ENCODE measurements at regions of chr5 and their contacts with region 1.

Region 1: GRCh38 chr5:10452768-10453331 is 11.2 kb downstream of the ROPN1L start:
- DNase-seq: peak; percentile 55
- ATAC-seq: peak; percentile 84
- H3K4me3 ChIP-seq: no peak overlapping the region
- H3K27ac ChIP-seq: no peak overlapping the region
- H3K4me1 ChIP-seq: no peaks in the 10 kb centered on the region
- H3K27me3 ChIP-seq: peaks cover 1 to 21% of the 10 kb centered on the region in 2 experiments; a peak in 3 of 5 replicates
- CTCF ChIP-seq: peak; percentile 79
- EP300 ChIP-seq: no peak
- POLR2A ChIP-seq: no peak
- RAD21 ChIP-seq: peak; percentile 71

Region 2: GRCh38 chr5:10339058-10339811 is 113.6 kb before region 1 on chr5:
- CTCF ChIA-PET with region 1: no interaction called
- POLR2A ChIA-PET with region 1: no interaction called
- in situ Hi-C with region 1: no loop called
- intact Hi-C with region 1: no loop called
- DNase-seq: no peak
- ATAC-seq: no peak
- H3K4me3 ChIP-seq: no peak overlapping the region
- H3K27ac ChIP-seq: no peak overlapping the region
- H3K4me1 ChIP-seq: peaks cover 13% of the 10 kb centered on the region
- H3K27me3 ChIP-seq: no peaks in the 10 kb centered on the region
- CTCF ChIP-seq: no peak
- EP300 ChIP-seq: no peak
- POLR2A ChIP-seq: no peak
- RAD21 ChIP-seq: no peak

Region 3: GRCh38 chr5:10627160-10627701 is 174.4 kb after region 1 on chr5:
- CTCF ChIA-PET with region 1: interaction called, 25 read pairs
- POLR2A ChIA-PET with region 1: no interaction called
- in situ Hi-C with region 1: loop called (anchors 5 kb)
- intact Hi-C with region 1: loop called (anchors 1 kb)
- DNase-seq: no peak
- ATAC-seq: peak; percentile 32
- H3K4me3 ChIP-seq: peak overlapping the region in 1 of 3 experiments; percentile 43; a peak in 2 of 6 replicates
- H3K27ac ChIP-seq: no peak overlapping the region
- H3K4me1 ChIP-seq: peaks cover 14% of the 10 kb centered on the region
- H3K27me3 ChIP-seq: peaks cover 0 to 22% of the 10 kb centered on the region in 2 experiments; a peak in 3 of 5 replicates
- CTCF ChIP-seq: no peak
- EP300 ChIP-seq: no peak
- POLR2A ChIP-seq: no peak
- RAD21 ChIP-seq: no peak

Region 4: GRCh38 chr5:10689391-10690081 is 236.7 kb after region 1 on chr5:
- CTCF ChIA-PET with region 1: no interaction called
- POLR2A ChIA-PET with region 1: no interaction called
- in situ Hi-C with region 1: no loop called
- intact Hi-C with region 1: loop called (anchors 2 kb)
- DNase-seq: no peak
- ATAC-seq: peak; percentile 75
- H3K4me3 ChIP-seq: no peak overlapping the region
- H3K27ac ChIP-seq: no peak overlapping the region
- H3K4me1 ChIP-seq: no peaks in the 10 kb centered on the region
- H3K27me3 ChIP-seq: no peaks in the 10 kb centered on the region
- CTCF ChIP-seq: peak; percentile 29; the same call in 1 of the 2 replicates
- EP300 ChIP-seq: no peak
- POLR2A ChIP-seq: no peak
- RAD21 ChIP-seq: no peak

Region 5: DNA sequence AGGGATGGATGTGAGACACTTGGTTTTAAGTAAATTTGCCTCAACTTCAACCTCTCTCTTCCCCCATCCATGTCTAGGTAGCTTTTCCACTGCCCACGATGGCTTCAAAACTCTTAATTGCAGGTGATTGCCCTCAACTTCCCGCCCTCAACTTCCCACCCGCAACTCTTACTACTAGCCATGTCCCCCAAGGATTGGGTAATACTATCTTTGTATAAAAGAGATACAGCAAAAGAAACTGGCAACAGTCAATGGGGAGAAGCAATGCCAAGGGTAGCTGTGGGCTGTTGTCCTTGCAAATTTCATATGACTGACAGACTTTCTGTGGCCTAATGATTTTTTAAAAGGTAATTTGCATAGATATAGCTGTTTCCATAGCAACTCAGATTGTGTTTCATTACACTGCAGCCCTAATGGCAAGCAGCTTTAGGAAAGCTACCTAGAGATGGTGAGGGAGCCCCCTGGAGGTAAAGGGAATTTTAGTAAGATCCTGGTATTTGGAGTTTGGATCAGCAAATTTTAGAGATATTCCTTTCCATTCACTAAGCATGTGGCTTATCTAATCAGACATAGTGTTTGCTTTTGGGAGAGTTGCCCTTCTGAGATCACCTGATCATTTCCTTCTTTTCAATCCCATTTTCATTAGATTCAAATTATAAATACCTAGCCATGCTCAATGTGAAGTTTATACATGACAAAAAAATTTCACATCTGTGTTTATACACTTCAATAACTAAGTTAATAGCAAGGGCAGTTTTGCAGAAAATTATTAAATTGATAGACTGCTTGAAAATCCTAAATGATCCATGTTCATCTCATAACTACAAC is 729.8 kb after region 1 on chr5:
- CTCF ChIA-PET with region 1: no interaction called
- POLR2A ChIA-PET with region 1: no interaction called
- in situ Hi-C with region 1: no loop called
- intact Hi-C with region 1: loop called (anchors 10 kb)
- DNase-seq: peak; percentile 23
- ATAC-seq: peak; percentile 73
- H3K4me3 ChIP-seq: no peak overlapping the region
- H3K27ac ChIP-seq: no peak overlapping the region
- H3K4me1 ChIP-seq: no peaks in the 10 kb centered on the region
- H3K27me3 ChIP-seq: no peaks in the 10 kb centered on the region
- CTCF ChIP-seq: peak; percentile 59
- EP300 ChIP-seq: no peak
- POLR2A ChIP-seq: no peak
- RAD21 ChIP-seq: no peak

Measured in HepG2 (cell line).